ENCODE measurements at regions of chr1 and their contacts with region 1.

Region 1: GRCh38 chr1:46718727-46719622 is at the start of gene EFCAB14:
- DNase-seq: peak; percentile 99
- ATAC-seq: peak; percentile 99
- H3K4me3 Mint-ChIP-seq: peak within 1 kb of the TSS; percentile 90
- H3K27ac Mint-ChIP-seq: peak within 1 kb of the TSS; percentile 87
- H3K4me1 Mint-ChIP-seq: peaks cover 35% of the 10 kb centered on the region
- H3K27me3 Mint-ChIP-seq: no peaks in the 10 kb centered on the region
- total RNA-seq, gene EFCAB14: 37.8 to 54.3 TPM

Region 2: GRCh38 chr1:46394108-46394871 is 324.7 kb before region 1 on chr1 and contains the start of gene FAAH:
- CTCF ChIA-PET with region 1: no interaction called
- POLR2A ChIA-PET with region 1: no interaction called
- intact Hi-C with region 1: loop called in 1 of 2 experiments (anchors 5 kb)
- DNase-seq: peak; percentile 79
- ATAC-seq: peak; percentile 86
- H3K4me3 Mint-ChIP-seq: peak within 1 kb of the TSS; percentile 66
- H3K27ac Mint-ChIP-seq: peak within 1 kb of the TSS; percentile 2
- H3K4me1 Mint-ChIP-seq: peaks cover 9% of the 10 kb centered on the region
- H3K27me3 Mint-ChIP-seq: peaks cover 8% of the 10 kb centered on the region
- total RNA-seq, gene FAAH: 5.3 to 7.5 TPM

Region 3: GRCh38 chr1:46616277-46617107 is 102.5 kb before region 1 on chr1 and contains the start of gene MOB3C:
- CTCF ChIA-PET with region 1: no interaction called
- POLR2A ChIA-PET with region 1: no interaction called
- intact Hi-C with region 1: loop called (anchors 1 to 5 kb)
- DNase-seq: peak; percentile 73
- ATAC-seq: peak; percentile 62
- H3K4me3 Mint-ChIP-seq: peak within 1 kb of the TSS; percentile 87
- H3K27ac Mint-ChIP-seq: peak within 1 kb of the TSS; percentile 89
- H3K4me1 Mint-ChIP-seq: peaks cover 41% of the 10 kb centered on the region
- H3K27me3 Mint-ChIP-seq: no peaks in the 10 kb centered on the region
- total RNA-seq, gene MOB3C: 8.5 to 8.9 TPM

Region 4: GRCh38 chr1:47067097-47067594 is 348.2 kb after region 1 on chr1 and contains the start of gene CYP4Z1:
- CTCF ChIA-PET with region 1: no interaction called
- POLR2A ChIA-PET with region 1: no interaction called
- intact Hi-C with region 1: no loop called
- DNase-seq: no peak
- ATAC-seq: no peak
- H3K4me3 Mint-ChIP-seq: no peak within 1 kb of the TSS
- H3K27ac Mint-ChIP-seq: no peak within 1 kb of the TSS
- H3K4me1 Mint-ChIP-seq: no peaks in the 10 kb centered on the region
- H3K27me3 Mint-ChIP-seq: peaks cover 18% of the 10 kb centered on the region
- total RNA-seq, gene CYP4Z1: not detected

Region 5: DNA sequence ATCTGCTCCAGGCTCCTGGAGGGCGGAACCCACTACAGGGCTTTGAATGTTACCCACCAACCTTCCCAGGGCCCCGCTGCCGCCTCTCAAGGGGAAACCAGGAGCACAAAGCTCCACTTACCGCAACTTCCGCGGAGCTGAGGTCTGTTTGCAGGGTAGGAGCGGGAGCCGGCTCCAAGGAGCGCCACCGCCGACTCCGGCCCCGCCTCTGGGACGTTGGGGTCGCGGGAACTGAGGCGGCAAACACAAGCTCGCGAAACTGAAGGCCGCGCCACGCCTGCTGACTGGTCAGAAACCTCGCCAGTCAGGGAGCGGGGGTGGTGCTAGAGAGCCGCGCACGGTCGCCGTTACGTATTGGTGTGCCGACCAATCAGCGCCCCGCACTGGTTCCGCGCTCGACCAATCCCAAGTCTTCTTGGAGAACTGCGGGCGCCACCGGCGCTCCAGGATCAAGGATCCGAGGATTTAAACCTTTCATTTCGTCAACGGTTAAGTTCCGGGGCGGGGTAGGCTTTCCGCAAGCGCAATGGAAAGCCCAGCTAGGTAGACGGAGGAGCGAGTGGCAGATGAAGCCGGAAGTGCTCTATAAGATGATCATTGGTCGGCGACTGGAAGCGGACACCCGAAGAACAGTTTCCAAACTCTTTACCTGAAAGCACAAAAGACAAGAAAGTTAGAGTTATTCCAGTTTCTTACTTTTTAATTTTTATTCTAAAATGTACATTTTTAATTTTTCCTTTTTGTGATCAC is 595.1 kb after region 1 on chr1 and contains the start of gene STIL:
- CTCF ChIA-PET with region 1: no interaction called
- POLR2A ChIA-PET with region 1: no interaction called
- intact Hi-C with region 1: loop called in 1 of 2 experiments (anchors 1 kb)
- DNase-seq: peak; percentile 99
- ATAC-seq: peak; percentile 97
- H3K4me3 Mint-ChIP-seq: peak within 1 kb of the TSS; percentile 84
- H3K27ac Mint-ChIP-seq: peak within 1 kb of the TSS; percentile 92
- H3K4me1 Mint-ChIP-seq: peaks cover 10% of the 10 kb centered on the region
- H3K27me3 Mint-ChIP-seq: no peaks in the 10 kb centered on the region
- total RNA-seq, gene STIL: 33.9 to 36.0 TPM

Measured in activated CD4-positive, alpha-beta T cell treated with anti-CD3 and anti-CD28 coated beads for 36 hours (primary cell).